ENCODE measurements at regions of chr3 and their contacts with region 1.

Region 1: GRCh38 chr3:108602249-108602934 is 12.9 kb downstream of the DZIP3 start:
- DNase-seq: peak in 31 of 35 experiments; percentile 22 to 71 (median 34)
- ATAC-seq: peak; percentile 76 to 94 (median 84)
- H3K4me3 ChIP-seq: peak overlapping the region; percentile 20 to 35
- H3K4me3 Mint-ChIP-seq: peak overlapping the region; percentile 65 to 77 (median 73)
- H3K27ac ChIP-seq: peak overlapping the region; percentile 79
- H3K27ac Mint-ChIP-seq: peak overlapping the region; percentile 89 to 98
- H3K4me1 ChIP-seq: peaks cover 17 to 39% of the 10 kb centered on the region in 2 experiments
- H3K4me1 Mint-ChIP-seq: peaks cover 54 to 64% (median 61%) of the 10 kb centered on the region in 3 donors
- H3K27me3 ChIP-seq: no peaks in the 10 kb centered on the region
- H3K27me3 Mint-ChIP-seq: no peaks in the 10 kb centered on the region

Region 2: GRCh38 chr3:108589146-108589997 is 13.0 kb before region 1 on chr3 and contains the starts of genes CIP2A and DZIP3:
- CTCF ChIA-PET with region 1: interaction called, 4 to 39 read pairs
- POLR2A ChIA-PET with region 1: interaction called, 19 to 53 read pairs
- DNase-seq: peak; percentile 68 to 93 (median 80)
- ATAC-seq: peak; percentile 79 to 82 (median 80)
- H3K4me3 ChIP-seq: peak within 1 kb of the TSS; percentile 69 to 84
- H3K4me3 Mint-ChIP-seq: peak within 1 kb of the TSS; percentile 94 to 99 (median 95)
- H3K27ac ChIP-seq: peak within 1 kb of the TSS; percentile 96
- H3K27ac Mint-ChIP-seq: peak within 1 kb of the TSS; percentile 98
- H3K4me1 ChIP-seq: peaks cover 3 to 15% of the 10 kb centered on the region in 2 experiments
- H3K4me1 Mint-ChIP-seq: peaks cover 31 to 40% (median 35%) of the 10 kb centered on the region in 3 donors
- H3K27me3 ChIP-seq: no peaks in the 10 kb centered on the region
- H3K27me3 Mint-ChIP-seq: no peaks in the 10 kb centered on the region
- total RNA-seq, gene CIP2A: 2.5 to 5.1 (median 4.5) TPM
- total RNA-seq, gene DZIP3: 9.3 to 19.9 (median 10.9) TPM

Region 3: GRCh38 chr3:108744762-108745161 is 142.4 kb after region 1 on chr3:
- CTCF ChIA-PET with region 1: no interaction called
- POLR2A ChIA-PET with region 1: no interaction called
- DNase-seq: no peak
- ATAC-seq: no peak
- H3K4me3 ChIP-seq: no peak overlapping the region
- H3K4me3 Mint-ChIP-seq: no peak overlapping the region
- H3K27ac ChIP-seq: no peak overlapping the region
- H3K27ac Mint-ChIP-seq: no peak overlapping the region
- H3K4me1 ChIP-seq: no peaks in the 10 kb centered on the region
- H3K4me1 Mint-ChIP-seq: peaks cover 0 to 6% (median 0%) of the 10 kb centered on the region in 3 donors
- H3K27me3 ChIP-seq: no peaks in the 10 kb centered on the region
- H3K27me3 Mint-ChIP-seq: peaks cover 0 to 4% of the 10 kb centered on the region in 2 donors